ENCODE measurements at regions of chr11 and their contacts with region 1.

Region 1: GRCh38 chr11:65791691-65792213 is 4.9 kb downstream of the OVOL1 start:
- DNase-seq: peak; percentile 56
- H3K4me3 Mint-ChIP-seq: no peak overlapping the region
- H3K27ac Mint-ChIP-seq: peak overlapping the region; percentile 29
- H3K4me1 Mint-ChIP-seq: peaks cover 17% of the 10 kb centered on the region
- H3K27me3 Mint-ChIP-seq: peaks cover 24% of the 10 kb centered on the region

Region 2: DNA sequence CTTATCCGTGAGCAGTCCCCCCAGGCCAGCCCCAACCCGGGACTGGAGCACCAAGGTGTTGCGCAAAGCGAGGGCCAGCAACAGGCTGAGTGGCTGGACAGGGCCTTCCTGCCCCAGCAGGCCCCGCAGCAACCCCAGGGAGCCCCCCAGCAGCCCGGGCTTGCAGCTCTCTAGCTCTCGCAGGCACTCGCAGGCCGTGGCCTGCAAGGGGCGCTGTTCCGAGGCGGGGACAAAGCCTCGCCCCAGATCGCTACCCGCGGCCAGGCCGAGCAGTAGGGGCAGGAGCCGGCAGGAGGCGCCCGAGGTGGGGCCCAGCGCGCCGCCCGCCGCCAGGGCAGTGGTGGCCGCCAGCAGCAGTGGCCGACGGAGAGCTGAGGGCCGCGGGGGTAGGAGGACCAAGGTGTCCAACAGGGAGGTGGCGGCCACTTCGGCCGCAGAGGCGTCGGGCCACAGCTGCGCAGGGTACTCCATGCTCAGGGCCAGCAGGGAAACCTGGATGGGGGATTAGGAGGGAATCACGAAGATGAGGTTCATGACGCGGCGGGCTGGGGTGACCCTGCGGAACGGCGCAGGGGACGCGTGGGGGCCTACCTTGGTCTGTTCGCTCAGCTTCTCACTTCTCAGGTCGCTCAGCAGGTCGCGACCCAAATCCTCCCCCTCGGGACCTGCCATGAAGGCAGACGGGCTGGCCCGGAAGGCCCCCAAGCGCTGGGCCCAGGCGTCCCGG is 11.7 kb before region 1 on chr11:
- intact Hi-C with region 1: loop called (anchors 1 kb)
- DNase-seq: peak; percentile 78
- H3K4me3 Mint-ChIP-seq: peak overlapping the region; percentile 88
- H3K27ac Mint-ChIP-seq: peak overlapping the region; percentile 91
- H3K4me1 Mint-ChIP-seq: peaks cover 27% of the 10 kb centered on the region
- H3K27me3 Mint-ChIP-seq: peaks cover 20% of the 10 kb centered on the region

Measured in activated T-helper 1 cell treated with anti-CD3 and anti-CD28 coated beads, Interleukin-12 subunit alpha, Interleukin-12 subunit beta, Interleukin-2, Interleukin-4 antibody, amounts not matched to agents 30 ng/mL and 10 ng/mL and 1 ng/mL, durations not matched to agents 14 hours and 24 hours and 36 hours (primary cell).